ENCODE measurements at regions of chr4 and their contacts with region 1.

Region 1: DNA sequence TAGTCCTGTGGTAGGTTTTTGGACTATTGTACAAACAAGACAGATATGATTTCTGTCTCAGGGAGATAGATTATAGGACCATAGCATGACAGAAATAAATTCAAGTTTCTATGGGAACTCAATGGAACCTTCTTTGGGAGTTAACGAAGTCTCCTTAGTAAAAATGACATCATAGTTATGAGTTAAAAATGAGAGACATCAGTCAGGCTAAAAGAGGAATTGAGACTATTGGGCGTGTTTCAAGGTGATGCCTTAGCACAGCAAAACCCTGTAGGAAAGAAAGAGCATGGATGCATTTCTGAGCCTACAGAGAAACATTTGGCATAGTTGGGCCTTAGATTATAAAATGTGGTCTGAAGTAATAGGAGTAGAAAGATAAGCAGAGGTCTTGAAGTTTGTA is 1909.1 kb upstream of the PCDH7 start:
- DNase-seq: no peak
- H3K4me3 Mint-ChIP-seq: no peak overlapping the region
- H3K27ac Mint-ChIP-seq: no peak overlapping the region
- H3K4me1 Mint-ChIP-seq: no peaks in the 10 kb centered on the region
- H3K27me3 Mint-ChIP-seq: no peaks in the 10 kb centered on the region

Region 2: GRCh38 chr4:28799696-28800095 is 11.3 kb before region 1 on chr4:
- intact Hi-C with region 1: no loop called
- DNase-seq: no peak
- H3K4me3 Mint-ChIP-seq: no peak overlapping the region
- H3K27ac Mint-ChIP-seq: no peak overlapping the region
- H3K4me1 Mint-ChIP-seq: no peaks in the 10 kb centered on the region
- H3K27me3 Mint-ChIP-seq: no peaks in the 10 kb centered on the region

Region 3: GRCh38 chr4:28822163-28822562 is 11.1 kb after region 1 on chr4:
- intact Hi-C with region 1: loop called (anchors 1 kb)
- DNase-seq: no peak
- H3K4me3 Mint-ChIP-seq: no peak overlapping the region
- H3K27ac Mint-ChIP-seq: no peak overlapping the region
- H3K4me1 Mint-ChIP-seq: no peaks in the 10 kb centered on the region
- H3K27me3 Mint-ChIP-seq: no peaks in the 10 kb centered on the region

Region 4: GRCh38 chr4:28835501-28835900 is 24.5 kb after region 1 on chr4:
- intact Hi-C with region 1: no loop called
- DNase-seq: no peak
- H3K4me3 Mint-ChIP-seq: no peak overlapping the region
- H3K27ac Mint-ChIP-seq: no peak overlapping the region
- H3K4me1 Mint-ChIP-seq: no peaks in the 10 kb centered on the region
- H3K27me3 Mint-ChIP-seq: no peaks in the 10 kb centered on the region

Region 5: GRCh38 chr4:28942631-28943030 is 131.6 kb after region 1 on chr4:
- intact Hi-C with region 1: no loop called
- DNase-seq: no peak
- H3K4me3 Mint-ChIP-seq: no peak overlapping the region
- H3K27ac Mint-ChIP-seq: no peak overlapping the region
- H3K4me1 Mint-ChIP-seq: no peaks in the 10 kb centered on the region
- H3K27me3 Mint-ChIP-seq: no peaks in the 10 kb centered on the region

Measured in activated T-helper 2 cell treated with anti-CD3 and anti-CD28 coated beads, Interferon-gamma antibody, Interleukin-2, Interleukin-4, amounts not matched to agents 10 μg/mL and 5 μg/mL and 100 μg/mL, durations not matched to agents 14 hours and 24 hours and 36 hours (primary cell).